OCI-LY7 (cell line): ENCODE measurements at regions of chr9 and their contacts with region 1.

Region 1: GRCh38 chr9:14322211-14323082 is 8.5 kb upstream of the NFIB start:
- DNase-seq: peak; percentile 94
- H3K4me3 ChIP-seq: peak overlapping the region; percentile 83
- H3K27ac ChIP-seq: peak overlapping the region; percentile 86
- H3K4me1 ChIP-seq: peaks cover 55% of the 10 kb centered on the region
- CTCF ChIP-seq: no peak

Region 2: GRCh38 chr9:14066831-14067230 is 255.6 kb before region 1 on chr9:
- CTCF ChIA-PET with region 1: no interaction called
- POLR2A ChIA-PET with region 1: interaction called, 3 read pairs
- intact Hi-C with region 1: loop called (anchors 5 kb)
- DNase-seq: no peak
- H3K4me3 ChIP-seq: no peak overlapping the region
- H3K27ac ChIP-seq: no peak overlapping the region
- H3K4me1 ChIP-seq: no peaks in the 10 kb centered on the region
- CTCF ChIP-seq: no peak

Region 3: DNA sequence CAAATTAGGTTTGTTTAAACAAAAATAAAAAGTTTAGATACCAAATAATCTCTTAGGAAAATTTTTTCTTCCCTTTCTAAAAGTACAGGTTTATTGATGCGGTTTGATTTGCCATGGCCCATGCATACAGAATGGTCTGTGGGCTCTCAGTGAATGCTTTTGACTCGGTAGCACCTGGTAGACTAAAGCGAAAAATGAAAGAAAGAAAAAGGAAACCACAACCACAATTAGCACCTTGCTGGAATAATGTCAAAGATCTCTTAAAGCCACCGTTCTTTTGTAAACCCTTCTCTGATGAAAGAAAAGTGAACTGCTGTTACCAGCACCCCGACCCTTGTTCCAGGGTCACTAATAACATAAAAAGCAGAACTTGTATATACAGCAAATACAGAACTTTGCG is 166.4 kb before region 1 on chr9:
- CTCF ChIA-PET with region 1: interaction called, 3 read pairs
- POLR2A ChIA-PET with region 1: interaction called, 5 read pairs
- intact Hi-C with region 1: loop called (anchors 2 kb)
- DNase-seq: peak; percentile 89
- H3K4me3 ChIP-seq: peak overlapping the region; percentile 62
- H3K27ac ChIP-seq: peak overlapping the region; percentile 100
- H3K4me1 ChIP-seq: peaks cover 91% of the 10 kb centered on the region
- CTCF ChIP-seq: no peak

Region 4: DNA sequence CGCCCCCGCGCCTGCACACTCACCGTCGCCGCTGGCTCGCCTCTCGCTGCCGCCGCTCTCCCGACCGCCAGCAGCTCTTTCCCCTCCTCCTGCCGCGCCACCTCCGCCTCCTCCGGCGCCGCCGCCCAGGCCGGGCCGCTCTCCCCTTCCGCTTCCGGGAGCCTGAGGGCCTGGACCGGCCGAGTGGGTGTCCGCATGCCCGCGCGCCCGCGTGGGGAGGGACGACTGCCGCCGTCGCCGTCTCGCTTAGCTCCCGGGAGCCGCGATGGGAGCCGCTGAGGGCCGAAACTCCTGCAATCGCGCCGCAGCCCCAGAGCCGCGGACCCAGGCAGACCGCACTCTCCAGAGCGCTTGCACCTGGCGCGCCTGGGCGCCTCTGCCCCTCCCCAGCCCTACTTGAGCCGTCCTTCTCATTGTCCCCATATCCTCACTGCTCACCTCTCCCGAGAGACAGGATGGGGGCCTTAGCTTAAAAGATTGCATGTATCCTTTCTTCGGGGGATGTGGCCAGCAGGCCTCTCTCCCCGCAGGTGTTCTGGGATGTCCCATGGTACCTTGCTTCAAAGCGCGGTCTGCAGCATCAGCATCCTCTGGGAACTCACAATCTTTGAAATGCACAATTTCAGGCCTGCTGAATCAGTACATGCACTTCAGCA is 370.9 kb after region 1 on chr9 and contains the start of gene ZDHHC21:
- CTCF ChIA-PET with region 1: no interaction called
- POLR2A ChIA-PET with region 1: no interaction called
- intact Hi-C with region 1: loop called (anchors 5 kb)
- DNase-seq: peak; percentile 72
- H3K4me3 ChIP-seq: peak within 1 kb of the TSS; percentile 79
- H3K27ac ChIP-seq: peak within 1 kb of the TSS; percentile 88
- H3K4me1 ChIP-seq: peaks cover 38% of the 10 kb centered on the region
- CTCF ChIP-seq: no peak
- total RNA-seq, gene ZDHHC21: 12.6 and 13.0 TPM in 2 replicates

Region 5: GRCh38 chr9:15422372-15423230 is 1100.2 kb after region 1 on chr9 and contains the start of gene SNAPC3:
- CTCF ChIA-PET with region 1: no interaction called
- POLR2A ChIA-PET with region 1: no interaction called
- intact Hi-C with region 1: loop called (anchors 5 kb)
- DNase-seq: peak; percentile 95
- H3K4me3 ChIP-seq: peak within 1 kb of the TSS; percentile 90
- H3K27ac ChIP-seq: peak within 1 kb of the TSS; percentile 68
- H3K4me1 ChIP-seq: peaks cover 40% of the 10 kb centered on the region
- CTCF ChIP-seq: no peak
- total RNA-seq, gene SNAPC3: 54.2 and 66.1 TPM in 2 replicates

Region 6: DNA sequence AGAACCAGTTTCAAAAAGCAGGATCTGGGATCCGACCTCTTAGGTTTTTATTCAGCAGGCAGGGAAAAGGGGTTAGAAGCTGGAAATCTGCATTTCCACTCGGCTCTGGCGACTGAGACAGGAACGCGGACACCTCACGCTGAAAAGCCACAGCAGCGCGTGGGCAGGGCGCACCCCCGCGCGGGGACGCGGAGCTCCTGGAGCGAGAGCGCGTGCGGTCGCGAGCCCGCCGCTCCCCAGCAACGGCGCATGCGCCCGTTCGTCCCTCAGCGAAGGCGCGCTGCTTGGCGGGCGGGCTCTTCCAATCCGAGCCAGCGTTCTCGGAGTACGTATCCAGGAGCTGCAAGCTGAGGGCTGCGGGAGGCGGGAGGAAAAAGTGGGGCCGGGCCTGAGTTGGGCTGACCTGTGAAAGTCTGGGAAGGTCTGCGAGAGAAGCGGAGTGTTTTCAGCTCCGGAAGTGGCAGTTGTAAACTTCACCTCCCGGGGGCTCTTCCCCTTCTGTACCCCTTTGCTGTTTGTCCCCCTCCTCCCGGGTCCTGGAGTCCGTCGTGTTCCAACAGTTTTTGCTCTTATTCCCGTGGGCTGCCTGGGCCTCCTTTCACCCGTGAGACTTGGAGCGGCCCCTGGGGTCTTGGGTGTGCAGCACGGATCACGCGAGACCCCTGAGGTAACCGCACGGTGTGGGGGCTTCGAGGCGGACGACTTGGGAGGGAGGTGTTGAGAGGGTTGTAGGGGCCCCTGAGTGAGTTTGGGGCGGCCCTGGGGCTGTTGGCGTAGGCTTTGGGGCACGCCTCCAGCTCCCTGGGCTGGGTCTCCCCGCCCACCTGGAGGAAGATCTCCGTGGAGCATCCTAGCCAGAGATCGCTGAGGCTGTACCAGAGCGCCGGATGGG is 1230.4 kb after region 1 on chr9 and contains the start of gene CCDC171:
- CTCF ChIA-PET with region 1: no interaction called
- POLR2A ChIA-PET with region 1: no interaction called
- intact Hi-C with region 1: loop called (anchors 5 kb)
- DNase-seq: peak; percentile 95
- H3K4me3 ChIP-seq: peak within 1 kb of the TSS; percentile 82
- H3K27ac ChIP-seq: peak within 1 kb of the TSS; percentile 87
- H3K4me1 ChIP-seq: peaks cover 41% of the 10 kb centered on the region
- CTCF ChIP-seq: no peak
- total RNA-seq, gene CCDC171: 10.4 and 11.6 TPM in 2 replicates